ENCODE measurements at regions of chr1 and their contacts with region 1.

Region 1: DNA sequence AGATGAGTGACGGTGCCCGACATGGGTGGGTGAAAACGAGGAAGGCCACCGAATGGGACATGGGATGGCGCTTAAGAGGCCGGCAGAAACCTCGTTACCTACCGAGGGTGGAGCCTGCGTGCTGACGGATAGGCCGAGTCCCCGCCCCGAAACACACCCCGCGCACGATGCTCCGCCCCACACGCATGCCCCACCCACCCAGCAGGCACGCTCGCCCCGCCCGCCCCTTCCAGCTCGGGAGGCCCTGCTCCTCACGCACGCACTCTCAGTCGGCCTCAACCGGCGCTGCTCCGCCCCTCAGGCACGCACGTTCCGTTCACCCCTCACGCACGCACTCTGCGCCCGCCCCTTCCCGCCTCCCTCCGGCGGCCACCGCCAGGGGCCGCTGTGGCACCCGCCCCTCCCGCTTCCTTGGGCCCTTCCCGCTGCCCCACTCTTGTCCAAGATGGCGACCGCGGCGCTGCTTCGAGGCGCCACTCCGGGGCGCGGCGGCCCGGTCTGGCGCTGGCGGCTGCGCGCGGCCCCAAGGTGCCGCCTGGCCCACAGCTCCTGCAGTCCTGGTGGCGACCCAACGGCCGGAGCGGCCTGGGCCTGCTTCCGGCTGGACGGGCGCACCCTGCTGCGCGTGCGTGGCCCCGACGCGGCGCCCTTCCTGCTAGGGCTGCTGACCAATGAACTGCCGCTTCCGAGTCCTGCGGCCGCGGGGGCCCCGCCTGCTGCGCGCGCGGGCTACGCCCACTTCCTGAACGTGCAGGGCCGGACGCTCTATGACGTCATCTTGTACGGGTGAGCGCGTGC is at the start of gene IBA57:
- DNase-seq: peak; percentile 100
- H3K4me3 Mint-ChIP-seq: peak within 1 kb of the TSS; percentile 81
- H3K27ac Mint-ChIP-seq: peak within 1 kb of the TSS; percentile 89
- H3K4me1 Mint-ChIP-seq: peaks cover 33% of the 10 kb centered on the region
- H3K27me3 Mint-ChIP-seq: no peaks in the 10 kb centered on the region
- total RNA-seq, gene IBA57: 3.8 to 4.8 TPM

Region 2: DNA sequence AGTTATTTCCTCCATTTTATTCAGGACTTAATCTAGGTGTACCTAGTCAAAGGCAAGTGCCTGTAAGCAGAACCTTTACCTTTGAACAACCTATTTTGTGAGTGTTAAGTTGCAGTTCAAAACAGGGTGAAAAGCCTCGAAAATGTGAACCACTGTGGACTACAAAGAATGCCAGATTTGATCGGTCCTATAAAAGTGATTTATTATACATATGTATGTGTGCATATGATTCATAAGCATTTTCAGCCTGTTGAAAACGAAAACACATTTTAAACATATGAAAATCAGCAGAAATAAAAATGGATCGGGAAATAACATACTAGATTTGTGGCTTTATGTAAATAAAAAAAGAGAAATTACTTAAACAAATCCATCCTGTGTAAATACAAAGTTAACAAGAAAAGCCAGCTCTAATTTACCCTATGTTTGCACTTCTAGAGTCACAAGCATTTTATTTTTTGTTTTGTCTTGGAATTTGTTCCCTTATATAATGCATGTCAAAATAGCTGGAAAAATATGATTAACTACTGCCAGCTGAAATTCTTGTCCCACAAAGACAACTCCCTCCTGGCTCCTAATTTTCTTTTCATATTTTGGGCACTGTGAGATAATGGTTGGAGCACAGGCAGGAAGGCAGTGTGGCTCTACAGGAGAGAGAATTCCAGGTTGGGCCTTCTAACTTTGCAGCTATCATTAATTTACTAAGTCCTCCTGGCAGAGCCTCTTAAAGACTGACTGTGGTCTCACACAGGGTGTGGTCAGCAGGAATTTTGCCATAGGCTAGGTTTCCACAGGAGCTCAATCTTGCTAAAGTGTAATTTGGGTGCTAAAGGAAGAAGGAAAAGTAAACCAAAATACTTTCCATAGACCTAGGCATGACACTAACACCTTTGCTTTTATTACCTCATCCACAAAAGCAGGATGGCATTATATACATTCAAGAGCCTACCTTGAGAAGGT is 777.1 kb before region 1 on chr1:
- CTCF ChIA-PET with region 1: no interaction called
- POLR2A ChIA-PET with region 1: no interaction called
- intact Hi-C with region 1: no loop called
- DNase-seq: no peak
- H3K4me3 Mint-ChIP-seq: no peak overlapping the region
- H3K27ac Mint-ChIP-seq: no peak overlapping the region
- H3K4me1 Mint-ChIP-seq: no peaks in the 10 kb centered on the region
- H3K27me3 Mint-ChIP-seq: no peaks in the 10 kb centered on the region

Region 3: GRCh38 chr1:227787513-227788270 is 377.9 kb before region 1 on chr1:
- CTCF ChIA-PET with region 1: no interaction called
- POLR2A ChIA-PET with region 1: no interaction called
- intact Hi-C with region 1: loop called (anchors 1 kb)
- DNase-seq: peak; percentile 97
- H3K4me3 Mint-ChIP-seq: peak overlapping the region; percentile 68
- H3K27ac Mint-ChIP-seq: no peak overlapping the region
- H3K4me1 Mint-ChIP-seq: peaks cover 11% of the 10 kb centered on the region
- H3K27me3 Mint-ChIP-seq: no peaks in the 10 kb centered on the region

Region 4: GRCh38 chr1:228082135-228082891 is 83.3 kb before region 1 on chr1 and contains the start of gene ARF1:
- CTCF ChIA-PET with region 1: interaction called, 4 read pairs
- POLR2A ChIA-PET with region 1: interaction called, 6 read pairs
- intact Hi-C with region 1: loop called (anchors 1 kb)
- DNase-seq: peak; percentile 93
- H3K4me3 Mint-ChIP-seq: peak within 1 kb of the TSS; percentile 91
- H3K27ac Mint-ChIP-seq: peak within 1 kb of the TSS; percentile 96
- H3K4me1 Mint-ChIP-seq: peaks cover 37% of the 10 kb centered on the region
- H3K27me3 Mint-ChIP-seq: no peaks in the 10 kb centered on the region
- total RNA-seq, gene ARF1: 346 to 355 TPM

Region 5: GRCh38 chr1:228109073-228109961 is 56.3 kb before region 1 on chr1 and contains the start of gene MRPL55:
- CTCF ChIA-PET with region 1: interaction called, 7 read pairs
- POLR2A ChIA-PET with region 1: interaction called, 3 read pairs
- intact Hi-C with region 1: loop called (anchors 1 kb)
- DNase-seq: peak; percentile 99
- H3K4me3 Mint-ChIP-seq: peak within 1 kb of the TSS; percentile 89
- H3K27ac Mint-ChIP-seq: peak within 1 kb of the TSS; percentile 84
- H3K4me1 Mint-ChIP-seq: peaks cover 25% of the 10 kb centered on the region
- H3K27me3 Mint-ChIP-seq: no peaks in the 10 kb centered on the region
- total RNA-seq, gene MRPL55: 51.1 to 52.7 TPM

Region 6: GRCh38 chr1:228139944-228140656 is 25.5 kb before region 1 on chr1 and contains the start of gene GUK1:
- CTCF ChIA-PET with region 1: interaction called, 13 read pairs
- POLR2A ChIA-PET with region 1: interaction called, 33 read pairs
- intact Hi-C with region 1: loop called (anchors 1 kb)
- DNase-seq: peak; percentile 100
- H3K4me3 Mint-ChIP-seq: peak within 1 kb of the TSS; percentile 99
- H3K27ac Mint-ChIP-seq: peak within 1 kb of the TSS; percentile 96
- H3K4me1 Mint-ChIP-seq: peaks cover 27% of the 10 kb centered on the region
- H3K27me3 Mint-ChIP-seq: peaks cover 2% of the 10 kb centered on the region
- total RNA-seq, gene GUK1: 229 to 239 TPM

Measured in activated CD4-positive, alpha-beta memory T cell treated with anti-CD3 and anti-CD28 coated beads for 36 hours (primary cell).